GM12878 (cell line): ENCODE measurements at regions of chr4 and their contacts with region 1.

Region 1: GRCh38 chr4:88033309-88033708 is 25.9 kb downstream of the PKD2 start:
- DNase-seq: no peak
- ATAC-seq: peak; percentile 87
- H3K4me3 ChIP-seq: no peak overlapping the region
- H3K27ac ChIP-seq: no peak overlapping the region
- H3K4me1 ChIP-seq: no peaks in the 10 kb centered on the region
- H3K27me3 ChIP-seq: no peaks in the 10 kb centered on the region
- CTCF ChIP-seq: peak; percentile 51 to 66 (median 64)
- EP300 ChIP-seq: no peak
- POLR2A ChIP-seq: no peak
- RAD21 ChIP-seq: peak; percentile 78

Region 2: DNA sequence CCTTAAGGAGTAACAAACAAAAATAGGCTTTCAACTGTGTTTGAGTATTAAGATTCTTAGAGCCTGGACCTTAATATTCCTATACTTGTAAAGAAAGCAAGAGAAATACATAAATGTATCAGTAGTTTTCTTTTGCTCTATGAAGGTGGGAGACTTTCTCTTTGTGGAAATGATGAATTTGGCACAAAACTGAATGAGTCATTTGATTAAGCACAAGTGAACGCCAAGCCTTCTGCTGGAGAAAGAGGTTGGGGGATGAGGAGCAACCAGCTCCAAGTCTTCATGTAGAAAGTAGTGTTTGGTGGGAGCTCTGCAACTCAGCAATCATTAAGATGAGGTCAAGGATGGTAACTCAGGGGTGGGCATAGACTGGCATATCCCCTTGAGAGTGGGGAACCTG is 151.0 kb before region 1 on chr4:
- CTCF ChIA-PET with region 1: no interaction called
- POLR2A ChIA-PET with region 1: no interaction called
- RAD21 ChIA-PET with region 1: no interaction called
- SMC1A ChIA-PET with region 1: no interaction called
- in situ Hi-C with region 1: no loop called
- intact Hi-C with region 1: no loop called
- DNase-seq: no peak
- ATAC-seq: no peak
- H3K4me3 ChIP-seq: no peak overlapping the region
- H3K27ac ChIP-seq: no peak overlapping the region
- H3K4me1 ChIP-seq: no peaks in the 10 kb centered on the region
- H3K27me3 ChIP-seq: no peaks in the 10 kb centered on the region
- CTCF ChIP-seq: no peak
- EP300 ChIP-seq: no peak
- POLR2A ChIP-seq: no peak
- RAD21 ChIP-seq: no peak

Region 3: GRCh38 chr4:88021824-88022223 is 11.5 kb before region 1 on chr4:
- CTCF ChIA-PET with region 1: interaction called, 39 read pairs
- POLR2A ChIA-PET with region 1: no interaction called
- RAD21 ChIA-PET with region 1: interaction called, 10 read pairs
- SMC1A ChIA-PET with region 1: interaction called, 4 read pairs
- in situ Hi-C with region 1: no loop called
- intact Hi-C with region 1: no loop called
- DNase-seq: no peak
- ATAC-seq: peak; percentile 21; the same call in 1 of the 3 replicates
- H3K4me3 ChIP-seq: no peak overlapping the region
- H3K27ac ChIP-seq: no peak overlapping the region
- H3K4me1 ChIP-seq: no peaks in the 10 kb centered on the region
- H3K27me3 ChIP-seq: no peaks in the 10 kb centered on the region
- CTCF ChIP-seq: no peak
- EP300 ChIP-seq: no peak
- POLR2A ChIP-seq: no peak
- RAD21 ChIP-seq: no peak

Region 4: GRCh38 chr4:88045021-88045420 is 11.7 kb after region 1 on chr4:
- CTCF ChIA-PET with region 1: interaction called, 18 read pairs
- POLR2A ChIA-PET with region 1: no interaction called
- RAD21 ChIA-PET with region 1: no interaction called
- SMC1A ChIA-PET with region 1: no interaction called
- in situ Hi-C with region 1: no loop called
- intact Hi-C with region 1: no loop called
- DNase-seq: no peak
- ATAC-seq: no peak
- H3K4me3 ChIP-seq: no peak overlapping the region
- H3K27ac ChIP-seq: no peak overlapping the region
- H3K4me1 ChIP-seq: no peaks in the 10 kb centered on the region
- H3K27me3 ChIP-seq: no peaks in the 10 kb centered on the region
- CTCF ChIP-seq: no peak
- EP300 ChIP-seq: no peak
- POLR2A ChIP-seq: no peak
- RAD21 ChIP-seq: no peak

Region 5: DNA sequence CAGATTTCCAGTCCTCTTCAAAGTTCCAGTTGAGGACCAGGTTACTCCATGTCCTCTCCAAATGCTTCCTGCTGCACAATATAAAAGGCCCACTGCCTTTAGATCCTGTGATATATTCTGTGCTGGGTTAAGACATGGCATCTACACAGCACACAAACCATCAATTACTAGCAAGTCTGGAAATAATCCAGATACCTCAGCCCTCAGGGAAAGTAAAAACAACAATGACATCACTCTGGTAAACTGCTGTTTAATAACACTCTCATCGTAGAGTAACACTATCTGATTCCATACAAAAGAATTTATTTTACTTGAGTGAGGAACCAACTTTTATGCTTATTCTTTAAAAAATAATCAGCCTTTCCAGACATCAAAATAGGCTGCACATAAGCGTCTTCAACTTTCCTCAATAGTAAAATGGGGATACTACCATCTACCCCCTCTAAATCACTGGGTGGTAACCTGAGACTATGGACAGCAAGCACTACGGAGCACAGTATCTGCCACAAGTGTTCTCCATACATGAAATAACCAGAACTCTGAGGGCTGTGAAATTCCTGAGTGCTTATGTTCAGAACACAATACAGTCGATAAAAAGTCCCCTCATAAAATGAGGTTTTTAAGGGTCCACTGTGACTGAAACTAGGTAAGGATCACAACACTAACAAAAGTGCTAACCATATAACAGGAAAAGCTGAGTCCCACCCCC is 71.7 kb after region 1 on chr4:
- CTCF ChIA-PET with region 1: no interaction called
- POLR2A ChIA-PET with region 1: no interaction called
- RAD21 ChIA-PET with region 1: no interaction called
- SMC1A ChIA-PET with region 1: no interaction called
- in situ Hi-C with region 1: no loop called
- intact Hi-C with region 1: no loop called
- DNase-seq: no peak
- ATAC-seq: no peak
- H3K4me3 ChIP-seq: no peak overlapping the region
- H3K27ac ChIP-seq: no peak overlapping the region
- H3K4me1 ChIP-seq: no peaks in the 10 kb centered on the region
- H3K27me3 ChIP-seq: no peaks in the 10 kb centered on the region; a peak in 1 of 4 replicates
- CTCF ChIP-seq: no peak
- EP300 ChIP-seq: no peak
- POLR2A ChIP-seq: no peak
- RAD21 ChIP-seq: no peak

Region 6: DNA sequence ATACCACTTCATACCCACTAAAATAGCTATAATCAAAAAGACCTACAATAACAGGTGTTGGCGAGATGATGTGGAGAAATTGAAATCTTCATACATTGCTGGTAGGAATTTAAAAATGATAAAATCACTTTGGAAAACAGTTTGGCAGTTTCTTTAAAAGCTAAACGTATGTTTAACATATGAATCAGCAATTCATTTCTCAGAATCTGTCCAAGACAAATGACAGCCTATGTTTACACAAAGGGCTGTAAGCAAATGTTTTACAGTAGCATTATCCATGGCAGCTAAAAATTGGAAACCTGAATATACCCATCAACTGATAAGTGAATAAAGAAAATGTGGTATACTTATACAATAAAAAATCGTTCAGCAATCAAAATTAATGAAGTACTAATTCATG is 158.1 kb after region 1 on chr4:
- CTCF ChIA-PET with region 1: interaction called, 11 read pairs
- POLR2A ChIA-PET with region 1: no interaction called
- RAD21 ChIA-PET with region 1: interaction called, 3 read pairs
- SMC1A ChIA-PET with region 1: no interaction called
- in situ Hi-C with region 1: no loop called
- intact Hi-C with region 1: no loop called
- DNase-seq: no peak
- ATAC-seq: no peak
- H3K4me3 ChIP-seq: no peak overlapping the region
- H3K27ac ChIP-seq: no peak overlapping the region
- H3K4me1 ChIP-seq: no peaks in the 10 kb centered on the region
- H3K27me3 ChIP-seq: no peaks in the 10 kb centered on the region
- CTCF ChIP-seq: no peak
- EP300 ChIP-seq: no peak
- POLR2A ChIP-seq: no peak
- RAD21 ChIP-seq: no peak

Region 7: GRCh38 chr4:88366460-88366859 is 333.2 kb after region 1 on chr4:
- CTCF ChIA-PET with region 1: no interaction called
- POLR2A ChIA-PET with region 1: no interaction called
- RAD21 ChIA-PET with region 1: no interaction called
- SMC1A ChIA-PET with region 1: interaction called, 3 read pairs
- in situ Hi-C with region 1: no loop called
- intact Hi-C with region 1: loop called (anchors 10 kb)
- DNase-seq: no peak
- ATAC-seq: peak; percentile 36
- H3K4me3 ChIP-seq: no peak overlapping the region
- H3K27ac ChIP-seq: no peak overlapping the region
- H3K4me1 ChIP-seq: no peaks in the 10 kb centered on the region
- H3K27me3 ChIP-seq: no peaks in the 10 kb centered on the region
- CTCF ChIP-seq: no peak
- EP300 ChIP-seq: no peak
- POLR2A ChIP-seq: no peak
- RAD21 ChIP-seq: no peak

Region 8: DNA sequence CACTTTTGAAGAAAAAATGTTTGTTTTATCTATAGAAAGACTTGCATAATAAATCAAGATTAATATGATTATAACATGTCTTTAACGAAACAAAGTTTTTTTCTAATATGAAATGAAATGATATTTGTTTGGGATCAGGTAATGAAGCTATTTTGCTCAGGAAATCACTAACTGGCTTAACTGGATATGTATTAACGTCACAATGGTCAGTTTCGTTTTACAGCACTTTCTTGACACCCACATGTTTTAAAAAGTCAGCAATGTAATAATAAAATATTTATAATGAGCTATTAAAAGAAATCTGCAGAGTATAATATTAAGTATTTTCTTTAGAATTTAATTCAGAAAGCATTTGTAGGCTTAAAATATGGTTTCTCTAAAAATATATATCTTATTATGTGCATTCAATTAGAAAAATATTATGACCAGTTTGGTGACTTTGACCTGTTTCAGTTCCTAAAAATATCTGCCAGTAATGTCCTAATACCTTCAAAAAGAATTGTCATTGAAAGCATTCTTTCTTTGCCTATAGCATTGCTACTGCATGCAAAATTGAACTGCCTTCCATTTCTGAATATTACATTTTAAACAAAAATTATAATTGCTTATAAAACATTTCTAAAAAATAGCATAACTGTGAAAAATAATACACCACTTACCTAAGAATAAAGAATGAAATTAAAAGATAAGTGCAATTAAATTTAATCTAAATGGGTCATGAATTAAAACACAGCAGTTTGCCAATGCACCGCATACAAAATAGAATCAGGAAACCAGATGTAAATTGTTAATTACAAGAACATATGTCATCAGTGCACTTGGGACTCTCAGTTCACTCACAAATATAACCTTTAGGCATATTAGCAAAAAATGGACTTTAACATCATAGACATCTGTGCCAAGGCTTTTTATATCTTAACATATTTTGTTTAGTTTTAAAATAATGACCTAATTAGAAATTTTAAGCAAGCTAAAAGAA is 1109.7 kb after region 1 on chr4:
- CTCF ChIA-PET with region 1: no interaction called
- POLR2A ChIA-PET with region 1: no interaction called
- RAD21 ChIA-PET with region 1: no interaction called
- SMC1A ChIA-PET with region 1: no interaction called
- in situ Hi-C with region 1: no loop called
- intact Hi-C with region 1: loop called (anchors 10 kb)
- DNase-seq: no peak
- ATAC-seq: peak; percentile 93
- H3K4me3 ChIP-seq: no peak overlapping the region
- H3K27ac ChIP-seq: no peak overlapping the region
- H3K4me1 ChIP-seq: no peaks in the 10 kb centered on the region
- H3K27me3 ChIP-seq: no peaks in the 10 kb centered on the region
- CTCF ChIP-seq: no peak
- EP300 ChIP-seq: peak; percentile 41 to 63; a peak in 2 of 4 replicates
- POLR2A ChIP-seq: no peak
- RAD21 ChIP-seq: no peak